Natural killer cell (primary cell): ENCODE measurements at regions of chr3 and their contacts with region 1.

Region 1: GRCh38 chr3:24237971-24238767 is 256.5 kb downstream of the THRB start:
- DNase-seq: peak in 1 of 2 donors; percentile 69
- ATAC-seq: peak; percentile 53 to 78 (median 58)
- H3K4me3 ChIP-seq: no peak overlapping the region
- H3K4me3 Mint-ChIP-seq: no peak overlapping the region
- H3K27ac ChIP-seq: no peak overlapping the region
- H3K27ac Mint-ChIP-seq: no peak overlapping the region
- H3K4me1 ChIP-seq: no peaks in the 10 kb centered on the region
- H3K4me1 Mint-ChIP-seq: no peaks in the 10 kb centered on the region
- H3K27me3 ChIP-seq: no peaks in the 10 kb centered on the region
- H3K27me3 Mint-ChIP-seq: no peaks in the 10 kb centered on the region
- CTCF ChIP-seq: no peak

Region 2: GRCh38 chr3:23888617-23889228 is 349.4 kb before region 1 on chr3:
- intact Hi-C with region 1: loop called (anchors 1 kb)
- DNase-seq: peak in 1 of 2 donors; percentile 70
- ATAC-seq: peak in 2 of 3 donors; percentile 61 to 64
- H3K4me3 ChIP-seq: no peak overlapping the region
- H3K4me3 Mint-ChIP-seq: no peak overlapping the region
- H3K27ac ChIP-seq: no peak overlapping the region
- H3K27ac Mint-ChIP-seq: no peak overlapping the region
- H3K4me1 ChIP-seq: no peaks in the 10 kb centered on the region
- H3K4me1 Mint-ChIP-seq: peaks cover 0 to 4% of the 10 kb centered on the region in 2 donors
- H3K27me3 ChIP-seq: no peaks in the 10 kb centered on the region
- H3K27me3 Mint-ChIP-seq: no peaks in the 10 kb centered on the region
- CTCF ChIP-seq: peak; percentile 87

Region 3: GRCh38 chr3:23999012-23999641 is 239.0 kb before region 1 on chr3:
- intact Hi-C with region 1: loop called (anchors 1 kb)
- DNase-seq: peak; percentile 47 to 66
- ATAC-seq: peak in 2 of 3 donors; percentile 38 to 48
- H3K4me3 ChIP-seq: no peak overlapping the region
- H3K4me3 Mint-ChIP-seq: no peak overlapping the region
- H3K27ac ChIP-seq: no peak overlapping the region
- H3K27ac Mint-ChIP-seq: no peak overlapping the region
- H3K4me1 ChIP-seq: no peaks in the 10 kb centered on the region
- H3K4me1 Mint-ChIP-seq: no peaks in the 10 kb centered on the region
- H3K27me3 ChIP-seq: no peaks in the 10 kb centered on the region
- H3K27me3 Mint-ChIP-seq: peaks cover 5 to 6% of the 10 kb centered on the region in 2 donors
- CTCF ChIP-seq: peak; percentile 84

Region 4: GRCh38 chr3:24365194-24365612 is 127.0 kb after region 1 on chr3:
- intact Hi-C with region 1: no loop called
- DNase-seq: no peak
- ATAC-seq: no peak
- H3K4me3 ChIP-seq: no peak overlapping the region
- H3K4me3 Mint-ChIP-seq: no peak overlapping the region
- H3K27ac ChIP-seq: no peak overlapping the region
- H3K27ac Mint-ChIP-seq: no peak overlapping the region
- H3K4me1 ChIP-seq: no peaks in the 10 kb centered on the region
- H3K4me1 Mint-ChIP-seq: no peaks in the 10 kb centered on the region
- H3K27me3 ChIP-seq: no peaks in the 10 kb centered on the region
- H3K27me3 Mint-ChIP-seq: no peaks in the 10 kb centered on the region
- CTCF ChIP-seq: no peak